CD4-positive, alpha-beta memory T cell (primary cell): ENCODE measurements at regions of chr10 and their contacts with region 1.

Region 1: DNA sequence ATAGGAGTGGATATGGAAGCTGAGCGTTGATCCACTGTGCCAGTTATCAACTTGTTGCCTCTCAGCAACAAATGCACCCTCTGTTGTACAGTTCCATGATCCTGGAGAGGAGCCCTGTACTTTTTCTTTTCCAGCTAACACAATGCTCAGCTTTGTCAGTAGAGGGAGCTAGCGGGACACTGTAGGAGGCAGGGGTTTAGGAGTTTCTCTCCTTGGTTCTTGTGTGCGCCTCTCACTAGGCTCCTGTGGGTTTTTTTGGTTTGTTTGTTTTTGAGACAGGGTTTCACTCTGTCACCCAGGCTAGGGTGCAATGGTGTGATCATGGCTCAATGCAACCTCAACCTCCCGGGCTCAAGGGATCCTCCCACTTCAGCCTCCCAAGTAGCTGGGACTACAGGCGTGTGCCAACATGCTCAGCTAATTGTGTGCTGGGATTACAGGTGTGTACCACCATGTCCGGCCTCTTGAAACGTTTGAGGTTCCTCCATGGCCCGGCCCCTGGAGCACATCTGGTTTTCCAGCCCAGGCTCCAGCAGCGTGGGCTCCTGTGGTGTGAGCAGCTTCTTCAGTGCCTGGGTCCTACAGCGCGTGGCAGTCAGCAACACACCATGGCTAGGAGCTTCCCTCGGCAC is 12.0 kb upstream of the MARVELD1 start:
- DNase-seq: peak; percentile 56 to 65 (median 64)
- H3K4me3 ChIP-seq: no peak overlapping the region
- H3K4me3 Mint-ChIP-seq: no peak overlapping the region
- H3K27ac ChIP-seq: no peak overlapping the region
- H3K27ac Mint-ChIP-seq: no peak overlapping the region
- H3K4me1 ChIP-seq: no peaks in the 10 kb centered on the region
- H3K4me1 Mint-ChIP-seq: no peaks in the 10 kb centered on the region
- H3K27me3 ChIP-seq: no peaks in the 10 kb centered on the region
- H3K27me3 Mint-ChIP-seq: peaks cover 8 to 10% of the 10 kb centered on the region in 2 donors

Region 2: DNA sequence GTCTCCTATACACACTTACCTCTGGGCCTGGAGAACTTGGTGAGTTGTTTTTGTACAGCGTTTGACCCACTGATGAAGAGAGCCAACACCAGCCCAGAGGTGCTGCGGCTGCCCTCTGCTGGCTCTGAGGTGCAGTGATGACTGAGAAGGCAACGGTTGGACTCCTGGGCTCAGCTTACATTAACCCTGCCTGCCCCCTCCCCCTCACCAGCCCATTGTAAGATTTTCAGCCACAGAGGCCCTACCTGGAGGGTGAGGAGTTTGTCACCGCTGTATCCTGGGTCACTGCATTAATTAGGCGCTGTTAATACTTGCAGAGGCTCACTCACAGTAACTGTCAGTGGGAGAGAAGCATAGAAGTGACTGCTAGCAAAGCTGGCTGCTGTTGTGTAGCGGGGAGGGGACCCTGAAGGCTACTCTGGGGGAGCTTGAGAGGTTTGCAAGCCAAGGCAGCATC is 148.0 kb before region 1 on chr10:
- CTCF ChIA-PET with region 1: no interaction called
- POLR2A ChIA-PET with region 1: no interaction called
- intact Hi-C with region 1: no loop called
- DNase-seq: peak in 4 of 5 donors; percentile 36 to 47 (median 40)
- H3K4me3 ChIP-seq: no peak overlapping the region
- H3K4me3 Mint-ChIP-seq: no peak overlapping the region
- H3K27ac ChIP-seq: no peak overlapping the region
- H3K27ac Mint-ChIP-seq: no peak overlapping the region
- H3K4me1 ChIP-seq: no peaks in the 10 kb centered on the region
- H3K4me1 Mint-ChIP-seq: peaks cover 0 to 3% (median under 1%) of the 10 kb centered on the region in 4 donors
- H3K27me3 ChIP-seq: no peaks in the 10 kb centered on the region
- H3K27me3 Mint-ChIP-seq: no peaks in the 10 kb centered on the region

Region 3: GRCh38 chr10:97676770-97677581 is 24.6 kb before region 1 on chr10:
- CTCF ChIA-PET with region 1: interaction called, 118 read pairs
- POLR2A ChIA-PET with region 1: no interaction called
- intact Hi-C with region 1: loop called (anchors 1 kb)
- DNase-seq: peak; percentile 48 to 56 (median 53)
- H3K4me3 ChIP-seq: no peak overlapping the region
- H3K4me3 Mint-ChIP-seq: no peak overlapping the region
- H3K27ac ChIP-seq: no peak overlapping the region
- H3K27ac Mint-ChIP-seq: peak overlapping the region in 4 of 7 donors; percentile 7 to 73 (median 38)
- H3K4me1 ChIP-seq: no peaks in the 10 kb centered on the region
- H3K4me1 Mint-ChIP-seq: peaks cover 0 to 1% (median 0%) of the 10 kb centered on the region in 4 donors
- H3K27me3 ChIP-seq: no peaks in the 10 kb centered on the region
- H3K27me3 Mint-ChIP-seq: no peaks in the 10 kb centered on the region

Region 4: GRCh38 chr10:97714048-97714371 is 12.5 kb after region 1 on chr10:
- CTCF ChIA-PET with region 1: interaction called, 23 read pairs
- POLR2A ChIA-PET with region 1: interaction called, 4 read pairs
- intact Hi-C with region 1: no loop called
- DNase-seq: peak; percentile 50 to 69 (median 54)
- H3K4me3 ChIP-seq: peak overlapping the region; percentile 30 to 55
- H3K4me3 Mint-ChIP-seq: peak overlapping the region; percentile 98 to 100 (median 99)
- H3K27ac ChIP-seq: no peak overlapping the region
- H3K27ac Mint-ChIP-seq: peak overlapping the region; percentile 37 to 96 (median 92)
- H3K4me1 ChIP-seq: peaks cover 6% of the 10 kb centered on the region
- H3K4me1 Mint-ChIP-seq: peaks cover 7 to 22% (median 14%) of the 10 kb centered on the region in 4 donors
- H3K27me3 ChIP-seq: no peaks in the 10 kb centered on the region
- H3K27me3 Mint-ChIP-seq: peaks cover 7 to 9% of the 10 kb centered on the region in 2 donors

Region 5: GRCh38 chr10:97731346-97732051 is 29.9 kb after region 1 on chr10:
- CTCF ChIA-PET with region 1: interaction called, 436 read pairs
- POLR2A ChIA-PET with region 1: interaction called, 3 read pairs
- intact Hi-C with region 1: loop called (anchors 1 kb)
- DNase-seq: peak; percentile 48 to 58 (median 55)
- H3K4me3 ChIP-seq: no peak overlapping the region
- H3K4me3 Mint-ChIP-seq: peak overlapping the region in 1 of 8 donors; percentile 40
- H3K27ac ChIP-seq: no peak overlapping the region
- H3K27ac Mint-ChIP-seq: no peak overlapping the region
- H3K4me1 ChIP-seq: peaks cover 2% of the 10 kb centered on the region
- H3K4me1 Mint-ChIP-seq: peaks cover 7 to 12% (median 11%) of the 10 kb centered on the region in 4 donors
- H3K27me3 ChIP-seq: no peaks in the 10 kb centered on the region
- H3K27me3 Mint-ChIP-seq: peaks cover 4 to 7% of the 10 kb centered on the region in 2 donors

Region 6: GRCh38 chr10:97743169-97743943 is 41.8 kb after region 1 on chr10:
- CTCF ChIA-PET with region 1: interaction called, 11 read pairs
- POLR2A ChIA-PET with region 1: no interaction called
- intact Hi-C with region 1: no loop called
- DNase-seq: no peak
- H3K4me3 ChIP-seq: no peak overlapping the region
- H3K4me3 Mint-ChIP-seq: peak overlapping the region in 1 of 8 donors; percentile 24
- H3K27ac ChIP-seq: no peak overlapping the region
- H3K27ac Mint-ChIP-seq: peak overlapping the region in 1 of 7 donors; percentile 14
- H3K4me1 ChIP-seq: peaks cover 29% of the 10 kb centered on the region
- H3K4me1 Mint-ChIP-seq: peaks cover 28 to 61% (median 45%) of the 10 kb centered on the region in 4 donors
- H3K27me3 ChIP-seq: no peaks in the 10 kb centered on the region
- H3K27me3 Mint-ChIP-seq: no peaks in the 10 kb centered on the region

Region 7: DNA sequence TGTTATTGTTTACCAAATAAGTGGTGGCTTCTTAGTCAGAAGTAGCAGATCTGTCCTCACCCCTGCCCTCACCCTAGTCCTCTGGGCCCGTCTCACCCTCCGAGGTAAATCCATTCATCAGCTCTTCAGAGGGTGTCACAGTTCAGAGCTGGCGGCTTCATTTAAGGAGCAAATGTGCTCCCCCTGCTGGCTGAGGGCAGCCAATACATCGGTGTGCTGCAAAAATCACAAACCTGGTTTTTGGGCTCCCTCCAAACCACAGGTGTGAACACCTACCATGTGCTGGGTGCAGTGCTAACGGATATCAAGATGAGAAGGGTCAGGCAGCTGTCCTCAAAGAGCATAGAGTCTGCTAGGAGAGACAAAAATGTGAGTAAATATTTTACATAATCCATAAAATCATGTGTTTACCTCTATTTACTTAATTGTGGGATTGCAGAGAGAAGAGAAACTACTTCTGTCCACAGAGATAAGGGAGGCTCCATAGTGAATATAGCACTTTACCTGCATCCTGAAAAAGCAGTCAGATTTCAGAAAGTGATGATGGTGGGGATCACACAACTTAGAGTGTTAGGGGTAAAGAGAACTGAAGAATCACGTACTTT is 344.3 kb after region 1 on chr10:
- CTCF ChIA-PET with region 1: interaction called, 9 read pairs
- POLR2A ChIA-PET with region 1: no interaction called
- intact Hi-C with region 1: loop called (anchors 10 kb)
- DNase-seq: peak; percentile 46 to 54 (median 47)
- H3K4me3 ChIP-seq: no peak overlapping the region
- H3K4me3 Mint-ChIP-seq: no peak overlapping the region
- H3K27ac ChIP-seq: no peak overlapping the region
- H3K27ac Mint-ChIP-seq: no peak overlapping the region
- H3K4me1 ChIP-seq: no peaks in the 10 kb centered on the region
- H3K4me1 Mint-ChIP-seq: peaks cover 0 to 5% (median 3%) of the 10 kb centered on the region in 4 donors
- H3K27me3 ChIP-seq: peaks cover 2% of the 10 kb centered on the region
- H3K27me3 Mint-ChIP-seq: peaks cover 25 to 35% of the 10 kb centered on the region in 2 donors